ENCODE measurements at regions of chr9 and their contacts with region 1.

Region 1: DNA sequence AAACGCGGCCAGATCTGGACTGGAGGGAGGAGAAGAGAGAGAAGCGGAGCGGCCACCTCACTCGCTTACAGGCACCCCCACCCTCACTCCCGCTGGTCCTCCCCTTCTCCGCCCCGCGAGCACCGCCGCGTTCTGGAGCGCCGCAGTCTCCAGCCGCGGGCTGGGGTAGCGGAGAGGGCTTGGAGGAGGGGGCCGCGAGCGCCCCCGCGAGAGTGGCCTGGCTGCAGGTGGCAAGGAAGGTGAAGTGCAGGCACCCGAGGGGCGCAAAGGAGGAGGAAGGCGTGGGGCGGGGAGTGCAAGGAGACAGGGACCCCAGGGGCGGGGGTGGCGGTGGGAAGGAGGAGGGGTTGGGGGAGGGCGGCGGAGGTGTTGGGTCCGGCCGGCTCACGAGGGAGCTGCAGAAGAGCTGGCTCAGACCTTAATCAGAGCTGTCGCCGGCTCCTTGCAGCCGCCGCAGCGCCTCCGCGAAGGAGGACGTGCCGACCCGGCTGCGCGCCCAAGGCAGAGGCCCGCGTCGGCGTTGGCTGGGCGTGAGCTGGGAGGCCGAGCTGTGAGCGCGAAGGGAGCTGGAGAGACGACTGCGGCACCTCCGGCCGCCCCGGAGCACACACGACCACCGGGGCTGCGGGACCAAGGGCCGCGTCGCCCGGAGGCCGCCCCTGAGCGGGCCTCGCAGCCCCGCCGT is at the start of gene DMRT3:
- DNase-seq: peak in 1 of 2 experiments; percentile 33
- H3K4me3 ChIP-seq: peak within 1 kb of the TSS; percentile 26
- H3K4me3 Mint-ChIP-seq: peak within 1 kb of the TSS; percentile 48
- H3K27ac Mint-ChIP-seq: no peak within 1 kb of the TSS
- H3K4me1 ChIP-seq: no peaks in the 10 kb centered on the region
- H3K4me1 Mint-ChIP-seq: no peaks in the 10 kb centered on the region
- H3K27me3 ChIP-seq: no peaks in the 10 kb centered on the region; the same call in 1 of the 2 replicates
- H3K27me3 Mint-ChIP-seq: peaks cover 15% of the 10 kb centered on the region
- CTCF ChIP-seq: no peak
- total RNA-seq, gene DMRT3: not detected in 2 replicates

Region 2: GRCh38 chr9:952546-952945 is 23.9 kb before region 1 on chr9:
- CTCF ChIA-PET with region 1: no interaction called
- POLR2A ChIA-PET with region 1: no interaction called
- intact Hi-C with region 1: loop called (anchors 1 kb)
- DNase-seq: no peak
- H3K4me3 ChIP-seq: no peak overlapping the region
- H3K4me3 Mint-ChIP-seq: no peak overlapping the region
- H3K27ac Mint-ChIP-seq: no peak overlapping the region
- H3K4me1 ChIP-seq: no peaks in the 10 kb centered on the region
- H3K4me1 Mint-ChIP-seq: no peaks in the 10 kb centered on the region
- H3K27me3 ChIP-seq: no peaks in the 10 kb centered on the region
- H3K27me3 Mint-ChIP-seq: peaks cover 4% of the 10 kb centered on the region
- CTCF ChIP-seq: no peak

Measured in Caco-2 (cell line).